ENCODE measurements at regions of chr9 and their contacts with region 1.

Region 1: GRCh38 chr9:134742822-134743535 is 101.4 kb downstream of the COL5A1 start:
- DNase-seq: no peak
- H3K4me3 ChIP-seq: no peak overlapping the region
- CTCF ChIP-seq: no peak
- POLR2A ChIP-seq: no peak

Region 2: DNA sequence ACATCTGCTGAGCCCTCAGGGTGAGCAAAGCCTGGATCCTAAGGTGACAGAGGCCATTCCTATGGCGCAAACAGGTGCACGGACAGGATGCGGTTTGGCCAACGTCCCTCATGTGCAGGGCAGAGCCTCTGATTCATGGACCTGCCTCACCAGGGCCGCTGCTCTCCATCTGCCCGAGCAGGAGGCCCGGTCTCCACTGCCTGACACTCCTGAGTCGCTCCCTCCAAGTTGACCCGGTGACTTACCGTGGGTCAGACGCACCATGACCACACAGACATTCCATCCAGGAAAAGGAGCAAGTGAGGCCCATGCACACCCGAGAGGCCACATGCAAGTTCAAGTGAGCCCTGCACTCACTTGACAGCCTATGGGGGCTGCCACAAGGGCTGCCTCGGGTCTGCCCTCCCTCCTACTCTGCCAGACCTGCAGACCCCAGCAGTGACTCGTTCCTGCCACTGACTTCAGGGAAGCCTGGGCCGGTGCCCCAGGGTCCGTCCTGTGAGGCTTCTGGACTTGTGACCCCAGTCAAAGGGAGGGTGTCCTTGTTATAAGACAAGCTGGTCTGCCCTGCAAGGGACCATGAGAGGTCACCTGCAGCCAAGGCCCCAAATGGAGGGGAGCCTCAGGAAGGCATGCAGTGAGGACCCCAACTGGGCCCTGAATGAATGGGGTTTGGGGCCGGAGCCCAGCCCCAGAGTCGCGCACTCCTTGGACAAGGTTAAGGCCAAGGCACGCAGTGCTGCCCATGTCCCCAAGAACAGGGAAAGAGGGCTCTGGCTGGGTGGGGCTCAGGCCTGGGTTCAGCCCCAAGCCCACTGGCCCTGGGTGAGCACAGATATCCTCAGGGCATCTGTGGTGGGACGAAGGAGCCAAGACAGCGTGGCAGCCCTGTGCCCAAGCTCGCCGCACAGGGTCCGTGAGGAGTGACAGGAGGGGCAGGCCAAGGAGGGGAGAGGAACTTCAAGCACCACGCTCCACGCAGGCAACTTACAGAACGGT is 707.6 kb before region 1 on chr9:
- intact Hi-C with region 1: no loop called
- DNase-seq: no peak
- H3K4me3 ChIP-seq: no peak overlapping the region
- CTCF ChIP-seq: no peak
- POLR2A ChIP-seq: no peak

Region 3: GRCh38 chr9:134449221-134449894 is 293.6 kb before region 1 on chr9:
- intact Hi-C with region 1: loop called (anchors 2 kb)
- DNase-seq: peak; percentile 93 to 98
- H3K4me3 ChIP-seq: no peak overlapping the region
- CTCF ChIP-seq: peak in 1 of 3 donors; percentile 59
- POLR2A ChIP-seq: no peak